ENCODE measurements at regions of chr22 and their contacts with region 1.

Region 1: GRCh38 chr22:21707677-21708076 is 27.9 kb downstream of the YPEL1 start:
- DNase-seq: peak in 3 of 4 experiments; percentile 73 to 84 (median 79)
- ATAC-seq: peak; percentile 38
- H3K4me3 ChIP-seq: no peak overlapping the region
- H3K27ac ChIP-seq: no peak overlapping the region
- H3K4me1 ChIP-seq: peaks cover 6 to 17% of the 10 kb centered on the region in 2 experiments; a peak in 4 of 5 replicates
- H3K27me3 ChIP-seq: peaks cover 42 to 65% of the 10 kb centered on the region in 2 experiments
- CTCF ChIP-seq: 0 out of 6 replicates have a peak, but pooled peaks of 1 of the 3 experiments have one; percentile 5
- EP300 ChIP-seq: peak; percentile 74
- POLR2A ChIP-seq: no peak
- RAD21 ChIP-seq: no peak

Region 2: DNA sequence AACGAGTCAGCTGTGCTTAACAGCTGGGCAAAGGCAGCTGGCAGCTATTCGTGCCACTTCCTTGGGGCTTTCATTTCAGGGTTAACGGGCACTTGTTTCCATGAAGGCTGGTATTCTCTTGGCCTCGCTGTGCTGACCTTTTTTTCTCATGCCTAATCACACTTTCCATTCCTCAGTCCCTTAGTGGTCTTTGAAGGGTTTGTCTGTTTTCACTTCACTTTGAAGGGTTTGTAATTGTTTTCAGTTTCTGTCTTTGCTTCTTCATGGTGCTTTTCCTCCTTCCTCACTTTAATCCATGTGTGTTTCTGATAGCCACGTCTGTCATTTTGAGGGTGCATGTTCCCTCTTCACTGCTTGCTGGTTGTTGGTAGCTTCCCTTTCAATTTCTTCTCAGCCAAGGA is 17.3 kb before region 1 on chr22:
- CTCF ChIA-PET with region 1: no interaction called
- POLR2A ChIA-PET with region 1: interaction called, 111 read pairs
- in situ Hi-C with region 1: no loop called
- intact Hi-C with region 1: no loop called
- DNase-seq: no peak
- ATAC-seq: no peak
- H3K4me3 ChIP-seq: no peak overlapping the region
- H3K27ac ChIP-seq: no peak overlapping the region
- H3K4me1 ChIP-seq: peaks cover 5 to 58% of the 10 kb centered on the region in 2 experiments; a peak in 3 of 5 replicates
- H3K27me3 ChIP-seq: no peaks in the 10 kb centered on the region
- CTCF ChIP-seq: no peak
- EP300 ChIP-seq: no peak
- POLR2A ChIP-seq: no peak
- RAD21 ChIP-seq: no peak

Region 3: DNA sequence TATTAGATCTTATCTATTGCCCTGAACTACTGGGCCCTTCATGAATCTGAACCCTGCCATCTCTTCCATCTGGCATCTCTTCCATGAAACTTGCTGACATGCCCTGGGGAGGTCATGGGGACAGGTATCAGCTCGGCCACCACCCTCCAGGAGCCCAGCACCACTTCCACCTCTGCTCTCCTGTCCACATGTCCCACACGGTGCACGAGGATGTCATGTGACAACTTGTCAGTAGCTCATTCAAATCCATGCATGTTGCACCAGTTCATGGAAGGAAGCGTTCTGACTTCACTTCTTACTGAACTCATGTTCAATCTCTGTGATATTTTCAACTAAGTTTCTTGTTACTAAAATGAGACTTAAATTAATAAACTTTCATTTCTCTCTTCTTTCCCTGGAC is 11.3 kb after region 1 on chr22:
- CTCF ChIA-PET with region 1: interaction called, 6 read pairs
- POLR2A ChIA-PET with region 1: interaction called, 20 read pairs
- in situ Hi-C with region 1: no loop called
- intact Hi-C with region 1: no loop called
- DNase-seq: peak in 2 of 4 experiments; percentile 61 to 63
- ATAC-seq: peak; percentile 29
- H3K4me3 ChIP-seq: no peak overlapping the region
- H3K27ac ChIP-seq: no peak overlapping the region
- H3K4me1 ChIP-seq: peaks cover 0 to 6% of the 10 kb centered on the region in 2 experiments; a peak in 3 of 5 replicates
- H3K27me3 ChIP-seq: peaks cover 31 to 56% of the 10 kb centered on the region in 2 experiments
- CTCF ChIP-seq: no peak
- EP300 ChIP-seq: no peak
- POLR2A ChIP-seq: no peak
- RAD21 ChIP-seq: no peak

Region 4: GRCh38 chr22:21735200-21736076 is 27.8 kb after region 1 on chr22 and contains the start of gene YPEL1:
- CTCF ChIA-PET with region 1: no interaction called
- POLR2A ChIA-PET with region 1: interaction called, 14 read pairs
- in situ Hi-C with region 1: no loop called
- intact Hi-C with region 1: no loop called
- DNase-seq: peak; percentile 100
- ATAC-seq: peak; percentile 96
- H3K4me3 ChIP-seq: peak within 1 kb of the TSS; percentile 52
- H3K27ac ChIP-seq: peak within 1 kb of the TSS; percentile 42
- H3K4me1 ChIP-seq: peaks cover 17 to 29% of the 10 kb centered on the region in 2 experiments
- H3K27me3 ChIP-seq: peaks cover 52 to 57% of the 10 kb centered on the region in 2 experiments
- CTCF ChIP-seq: peak in 1 of 3 experiments; percentile 1; a peak in 2 of 6 replicates
- EP300 ChIP-seq: peak; percentile 43
- POLR2A ChIP-seq: no peak
- RAD21 ChIP-seq: peak in 1 of 2 experiments; percentile 59; a peak in 2 of 4 replicates
- polyA plus RNA-seq, gene YPEL1: 0.07 to 0.10 TPM

Region 5: DNA sequence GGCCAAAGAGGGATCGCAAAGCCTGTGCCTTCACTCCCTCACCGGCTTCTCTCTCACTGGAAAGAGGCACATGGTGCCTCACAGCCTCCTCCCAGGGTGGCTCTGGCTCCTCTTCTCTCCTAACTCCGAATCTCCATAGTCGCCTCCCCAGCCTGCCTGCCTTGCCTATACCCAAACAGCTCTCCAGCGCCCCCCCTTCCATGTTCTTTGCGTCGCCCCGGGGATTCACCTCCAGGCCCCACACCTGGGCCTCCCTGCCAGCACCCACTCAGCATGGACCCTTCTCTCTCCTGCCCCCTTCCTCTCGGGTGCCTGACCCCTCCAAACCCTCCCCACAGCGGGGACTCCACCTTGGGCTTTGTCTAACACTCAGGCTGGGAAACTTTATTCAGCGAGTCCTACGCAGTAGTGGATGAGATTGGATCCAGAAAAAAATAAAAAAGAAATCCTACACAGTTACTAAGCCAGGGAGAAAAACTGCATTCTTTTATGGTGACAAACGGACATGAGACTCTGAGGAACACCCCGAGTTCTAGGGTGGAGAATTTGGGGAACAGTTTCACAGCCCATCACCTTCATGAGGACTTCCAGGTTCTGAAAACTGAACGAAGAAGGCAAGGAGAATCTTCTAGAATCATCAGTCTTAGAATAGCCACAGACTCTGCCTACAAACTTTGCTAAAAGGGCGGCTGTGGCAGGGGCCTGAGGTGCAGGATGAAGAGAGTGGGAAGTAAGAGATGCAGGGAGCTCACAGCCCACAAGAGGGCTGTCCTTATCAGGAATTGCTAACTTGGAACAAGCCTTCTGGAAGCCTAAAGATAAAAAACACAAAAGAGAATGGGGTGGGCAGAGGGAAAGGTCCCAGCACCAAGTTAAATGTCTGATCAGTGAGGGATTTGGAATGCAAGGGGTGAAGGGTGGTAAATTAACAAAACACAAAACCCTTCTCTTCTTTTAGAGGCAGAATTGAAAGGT is 239.7 kb after region 1 on chr22:
- CTCF ChIA-PET with region 1: interaction called, 609 read pairs
- POLR2A ChIA-PET with region 1: interaction called, 12 read pairs
- in situ Hi-C with region 1: loop called (anchors 5 kb)
- intact Hi-C with region 1: loop called (anchors 2 kb)
- DNase-seq: peak; percentile 98 to 100 (median 100)
- ATAC-seq: peak; percentile 84
- H3K4me3 ChIP-seq: no peak overlapping the region; the same call in 1 of the 2 replicates
- H3K27ac ChIP-seq: peak overlapping the region; percentile 52
- H3K4me1 ChIP-seq: peaks cover 35 to 67% of the 10 kb centered on the region in 2 experiments
- H3K27me3 ChIP-seq: no peaks in the 10 kb centered on the region
- CTCF ChIP-seq: peak in 2 of 3 experiments; percentile 98 to 99; a peak in 4 of 6 replicates
- EP300 ChIP-seq: peak; percentile 97
- POLR2A ChIP-seq: no peak
- RAD21 ChIP-seq: no peak

Region 6: DNA sequence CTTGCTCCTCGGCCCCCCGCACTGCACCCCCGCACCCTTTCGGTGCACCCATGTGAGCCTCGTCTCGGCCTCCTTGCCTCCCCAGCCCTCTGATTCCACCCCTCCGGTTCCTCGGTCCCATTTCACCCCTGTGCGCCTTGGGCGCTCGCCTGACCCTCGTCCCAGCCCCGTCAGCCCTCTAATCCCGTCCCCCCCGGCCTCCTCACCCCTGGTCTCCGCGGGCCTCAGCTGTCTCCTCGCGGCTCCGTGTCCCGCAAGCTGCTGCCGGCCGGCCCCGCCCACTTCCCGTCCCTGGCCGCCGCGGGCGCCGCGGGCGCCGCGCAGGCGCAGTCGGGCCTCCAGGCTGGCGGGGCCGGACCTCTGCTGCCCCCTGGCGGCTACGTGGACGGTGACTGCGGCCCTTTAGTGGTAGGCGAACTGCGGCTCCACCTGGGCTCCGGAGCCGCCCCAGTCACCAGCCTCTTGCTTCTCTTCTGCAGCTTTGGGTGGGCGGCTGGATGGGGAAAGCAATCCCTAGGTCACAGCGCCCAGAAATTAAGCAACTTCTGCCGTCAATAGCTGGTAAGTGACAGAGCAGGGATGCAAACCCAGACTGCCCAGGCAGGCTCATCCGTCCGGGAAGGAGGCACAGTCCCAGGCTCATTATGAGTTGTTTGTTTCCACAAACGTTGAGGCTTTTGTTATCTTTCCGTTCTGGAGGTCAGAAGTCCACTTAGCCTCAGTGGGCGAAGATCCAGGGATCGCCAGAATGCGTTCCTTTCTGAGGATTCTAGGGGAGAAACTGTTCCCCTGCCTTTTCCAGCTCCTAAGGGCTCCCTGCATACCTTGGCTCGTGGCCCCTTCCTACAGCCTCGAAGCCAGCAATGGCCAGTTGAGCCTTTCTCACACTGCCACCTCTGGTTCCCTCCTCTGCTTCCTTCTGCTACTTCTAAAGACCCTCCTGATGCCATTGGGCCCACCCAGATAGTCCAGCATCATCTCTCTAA is 245.2 kb after region 1 on chr22 and contains the start of gene PPM1F:
- CTCF ChIA-PET with region 1: interaction called, 114 read pairs
- POLR2A ChIA-PET with region 1: interaction called, 12 read pairs
- in situ Hi-C with region 1: loop called (anchors 5 kb)
- intact Hi-C with region 1: loop called (anchors 2 kb)
- DNase-seq: peak; percentile 100
- ATAC-seq: peak; percentile 84
- H3K4me3 ChIP-seq: peak within 1 kb of the TSS; percentile 66
- H3K27ac ChIP-seq: peak within 1 kb of the TSS; percentile 68
- H3K4me1 ChIP-seq: peaks cover 25 to 39% of the 10 kb centered on the region in 2 experiments
- H3K27me3 ChIP-seq: no peaks in the 10 kb centered on the region
- CTCF ChIP-seq: peak; percentile 99 to 100 (median 100)
- EP300 ChIP-seq: peak; percentile 72
- POLR2A ChIP-seq: no peak
- RAD21 ChIP-seq: no peak
- polyA plus RNA-seq, gene PPM1F: 2.1 to 4.5 TPM